Posterior vena cava (tissue), 2 donors: ENCODE measurements at regions of chr15 and their contacts with region 1.

Region 1: GRCh38 chr15:81091889-81092558 is 42.0 kb upstream of the CFAP161 start:
- DNase-seq: no peak

Region 2: GRCh38 chr15:81049835-81050234 is 42.2 kb before region 1 on chr15:
- intact Hi-C with region 1: loop called in 1 of 2 experiments (anchors 2 kb)
- DNase-seq: no peak

Region 3: GRCh38 chr15:81074773-81075172 is 17.3 kb before region 1 on chr15:
- intact Hi-C with region 1: loop called in 1 of 2 experiments (anchors 1 kb)
- DNase-seq: no peak

Region 4: GRCh38 chr15:81312790-81313543 is 220.9 kb after region 1 on chr15:
- intact Hi-C with region 1: no loop called
- DNase-seq: peak; percentile 94